Activated CD8-positive, alpha-beta T cell treated with anti-CD3 and anti-CD28 coated beads, Interleukin-2, amount 10 ng/mL, durations not matched to agents 7 days and 5 days (primary cell): ENCODE measurements at regions of chr5 and their contacts with region 1.

Region 1: DNA sequence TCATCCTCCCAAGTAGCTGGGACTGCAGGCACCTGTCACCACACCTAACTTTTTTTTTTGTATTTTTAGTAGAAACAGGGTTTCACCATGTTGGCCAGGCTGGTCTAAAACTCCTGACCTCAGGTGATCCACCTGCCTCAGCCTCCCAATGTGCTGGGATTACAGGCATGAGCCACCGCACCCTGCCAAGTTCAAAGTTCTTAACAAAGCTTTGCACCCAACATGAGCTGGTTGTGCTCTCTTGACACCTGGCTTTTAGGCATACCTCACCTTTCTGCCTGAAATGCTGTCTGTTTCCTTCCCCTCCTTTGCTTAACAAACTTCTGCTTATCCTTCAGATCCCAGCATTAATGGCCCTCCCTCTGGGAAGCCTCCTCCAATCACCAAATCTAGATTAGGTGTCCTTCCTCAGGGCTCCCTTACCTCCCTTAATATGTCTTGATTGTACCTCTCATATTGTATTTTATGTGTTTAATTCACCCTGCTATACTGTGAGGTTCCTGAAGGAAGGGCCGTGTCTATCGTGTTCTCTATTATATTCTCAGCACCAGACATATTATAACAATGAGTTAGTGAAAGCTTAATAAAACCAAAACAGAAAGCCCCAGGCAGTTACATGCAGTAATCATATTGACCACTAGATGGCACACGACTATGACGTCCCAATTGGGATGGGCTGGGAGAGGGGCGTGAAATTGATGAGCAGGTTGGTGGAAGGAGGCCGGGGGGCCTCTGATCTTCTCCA is 62.9 kb upstream of the PPARGC1B start:
- DNase-seq: peak; percentile 56
- ATAC-seq: peak; percentile 44
- H3K4me3 Mint-ChIP-seq: no peak overlapping the region
- H3K27ac Mint-ChIP-seq: no peak overlapping the region
- H3K4me1 Mint-ChIP-seq: no peaks in the 10 kb centered on the region
- H3K27me3 Mint-ChIP-seq: peaks cover 4% of the 10 kb centered on the region

Region 2: GRCh38 chr5:149636851-149637246 is 30.4 kb before region 1 on chr5:
- CTCF ChIA-PET with region 1: interaction called, 10 read pairs
- POLR2A ChIA-PET with region 1: no interaction called
- DNase-seq: peak; percentile 65
- ATAC-seq: peak; percentile 72
- H3K4me3 Mint-ChIP-seq: no peak overlapping the region
- H3K27ac Mint-ChIP-seq: no peak overlapping the region
- H3K4me1 Mint-ChIP-seq: peaks cover 7% of the 10 kb centered on the region
- H3K27me3 Mint-ChIP-seq: no peaks in the 10 kb centered on the region

Region 3: GRCh38 chr5:149724130-149724840 is 57.0 kb after region 1 on chr5:
- CTCF ChIA-PET with region 1: interaction called, 19 read pairs
- POLR2A ChIA-PET with region 1: no interaction called
- DNase-seq: peak; percentile 60
- ATAC-seq: peak; percentile 96
- H3K4me3 Mint-ChIP-seq: peak overlapping the region; percentile 45
- H3K27ac Mint-ChIP-seq: peak overlapping the region; percentile 78
- H3K4me1 Mint-ChIP-seq: peaks cover 14% of the 10 kb centered on the region
- H3K27me3 Mint-ChIP-seq: peaks cover 14% of the 10 kb centered on the region

Region 4: DNA sequence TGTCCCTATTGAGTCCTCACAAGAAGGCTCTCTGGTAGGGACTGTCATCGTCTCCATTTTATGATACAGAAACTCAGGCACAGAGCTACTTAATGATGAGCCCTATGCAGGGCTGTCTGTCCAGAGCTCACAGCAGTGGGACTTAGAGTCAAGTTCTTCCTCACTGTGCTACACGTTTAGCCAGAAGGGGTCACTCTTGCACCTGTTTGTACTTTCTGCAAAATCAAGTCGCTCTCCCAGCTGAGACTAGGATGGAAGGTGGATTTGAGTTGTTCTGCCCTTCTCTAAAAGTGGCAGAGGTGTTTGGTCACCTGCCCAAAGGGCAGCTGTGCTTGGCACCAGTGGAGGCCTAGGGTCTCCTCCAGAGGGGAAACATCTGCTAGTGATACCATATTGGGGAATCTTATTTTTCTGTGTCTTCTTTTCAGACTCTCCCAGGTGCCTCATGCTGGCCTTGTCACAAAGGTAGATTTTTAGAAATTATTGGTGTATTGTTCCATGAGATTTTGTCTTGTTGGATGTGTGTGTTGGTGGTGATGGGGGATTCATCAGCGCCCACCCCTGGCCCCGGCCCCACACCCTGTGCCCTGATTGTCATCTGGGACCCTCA is 167.1 kb after region 1 on chr5:
- CTCF ChIA-PET with region 1: interaction called, 74 read pairs
- POLR2A ChIA-PET with region 1: no interaction called
- DNase-seq: peak; percentile 73
- ATAC-seq: peak; percentile 48
- H3K4me3 Mint-ChIP-seq: no peak overlapping the region
- H3K27ac Mint-ChIP-seq: no peak overlapping the region
- H3K4me1 Mint-ChIP-seq: peaks cover 5% of the 10 kb centered on the region
- H3K27me3 Mint-ChIP-seq: no peaks in the 10 kb centered on the region

Region 5: GRCh38 chr5:149990518-149991376 is 323.5 kb after region 1 on chr5:
- CTCF ChIA-PET with region 1: interaction called, 19 read pairs
- POLR2A ChIA-PET with region 1: no interaction called
- DNase-seq: peak; percentile 80
- ATAC-seq: peak; percentile 85
- H3K4me3 Mint-ChIP-seq: no peak overlapping the region
- H3K27ac Mint-ChIP-seq: no peak overlapping the region
- H3K4me1 Mint-ChIP-seq: peaks cover 2% of the 10 kb centered on the region
- H3K27me3 Mint-ChIP-seq: no peaks in the 10 kb centered on the region